Sigmoid colon (tissue), 7 donors: ENCODE measurements at regions of chr19 and their contacts with region 1.

Region 1: DNA sequence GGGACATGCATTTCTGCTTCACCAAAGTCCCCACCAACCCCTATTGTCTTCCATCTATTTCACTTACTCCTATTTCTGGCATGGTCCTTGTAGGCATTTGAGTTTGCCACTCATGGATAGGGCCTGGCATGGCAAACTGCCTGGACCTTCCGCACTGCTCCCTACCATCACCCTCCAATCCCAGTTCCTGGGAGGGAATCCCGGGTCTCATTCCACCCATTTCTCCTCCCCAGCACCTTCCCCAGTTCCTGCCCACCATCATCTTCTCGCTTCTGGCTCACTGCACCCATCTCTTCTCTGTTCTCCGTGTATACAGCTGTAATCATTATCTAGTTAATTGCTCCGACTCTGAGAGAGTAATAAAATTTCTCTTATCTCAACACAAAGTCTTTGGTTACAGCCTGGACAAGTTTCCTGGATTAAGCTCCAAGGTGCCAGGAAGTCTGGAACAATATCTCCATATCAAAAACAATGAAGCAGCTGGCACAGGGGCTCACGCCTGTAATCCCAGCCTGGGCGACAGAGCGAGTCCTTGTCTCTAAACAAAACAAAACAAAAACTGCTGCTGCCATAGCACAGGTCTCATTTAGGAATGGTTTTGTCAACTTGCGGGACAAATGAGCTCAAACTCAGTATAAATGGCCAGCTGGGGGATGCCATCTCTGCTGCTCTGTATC is 17.0 kb upstream of the COX7A1 start:
- DNase-seq: no peak
- H3K4me3 ChIP-seq: no peak overlapping the region
- H3K27ac ChIP-seq: peak overlapping the region; percentile 21 to 67 (median 38)
- H3K4me1 ChIP-seq: peaks cover 0 to 4% (median 2%) of the 10 kb centered on the region in 4 donors
- H3K27me3 ChIP-seq: no peaks in the 10 kb centered on the region
- CTCF ChIP-seq: no peak
- EP300 ChIP-seq: no peak
- POLR2A ChIP-seq: no peak

Region 2: DNA sequence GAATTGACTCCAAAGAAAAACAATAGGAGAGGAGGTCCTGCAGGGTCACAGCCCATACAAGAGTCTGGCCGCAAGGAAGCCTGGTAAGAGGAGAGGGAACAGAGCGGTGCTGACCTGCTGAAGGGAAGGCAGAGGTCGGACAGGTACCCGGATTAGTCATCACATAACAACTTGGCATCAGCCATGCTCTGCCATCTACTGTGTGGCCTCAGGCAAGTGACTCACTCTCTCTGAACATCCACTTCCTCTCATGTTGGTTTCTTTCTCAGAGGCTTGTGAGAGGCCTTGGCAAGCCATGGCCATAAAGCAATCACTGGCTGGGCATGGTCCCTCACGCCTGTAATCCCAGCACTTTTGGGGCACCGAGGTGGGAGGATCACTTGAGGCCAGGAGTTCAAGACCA is 36.7 kb before region 1 on chr19:
- intact Hi-C with region 1: loop called (anchors 1 kb)
- DNase-seq: no peak
- H3K4me3 ChIP-seq: no peak overlapping the region
- H3K27ac ChIP-seq: no peak overlapping the region
- H3K4me1 ChIP-seq: peaks cover 0 to 26% (median 22%) of the 10 kb centered on the region in 4 donors
- H3K27me3 ChIP-seq: no peaks in the 10 kb centered on the region
- CTCF ChIP-seq: no peak
- EP300 ChIP-seq: no peak
- POLR2A ChIP-seq: no peak

Region 3: DNA sequence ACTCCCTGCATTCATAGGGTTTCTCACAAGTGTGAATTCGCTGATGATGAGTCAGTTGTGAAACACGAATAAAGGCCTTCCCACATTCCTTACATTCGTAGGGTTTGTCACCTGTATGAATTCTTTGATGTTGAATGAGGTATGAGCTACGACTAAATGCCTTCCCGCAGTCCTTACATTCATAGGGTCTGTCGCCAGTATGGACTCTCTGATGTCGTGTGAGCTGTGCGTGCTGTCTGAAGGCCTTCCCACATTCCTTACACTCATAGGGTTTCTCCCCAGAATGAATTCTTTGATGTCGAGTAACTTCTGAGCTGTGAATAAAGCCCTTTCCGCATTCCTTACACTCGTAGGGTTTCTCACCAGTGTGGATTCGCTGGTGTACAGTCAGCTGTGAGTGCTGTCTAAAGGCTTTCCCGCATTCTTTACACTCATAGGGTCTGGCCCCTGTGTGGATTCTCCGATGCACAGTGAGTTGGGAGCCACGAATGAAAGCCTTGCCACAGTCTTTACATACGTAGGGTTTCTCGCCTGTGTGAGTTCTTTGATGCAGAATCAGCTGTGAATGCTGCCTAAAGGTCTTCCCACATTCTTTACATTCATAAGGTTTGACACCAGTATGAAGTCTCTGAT is 13.5 kb after region 1 on chr19:
- intact Hi-C with region 1: no loop called
- DNase-seq: no peak
- H3K4me3 ChIP-seq: no peak overlapping the region
- H3K27ac ChIP-seq: no peak overlapping the region
- H3K4me1 ChIP-seq: no peaks in the 10 kb centered on the region
- H3K27me3 ChIP-seq: no peaks in the 10 kb centered on the region
- CTCF ChIP-seq: no peak
- EP300 ChIP-seq: no peak
- POLR2A ChIP-seq: no peak

Region 4: DNA sequence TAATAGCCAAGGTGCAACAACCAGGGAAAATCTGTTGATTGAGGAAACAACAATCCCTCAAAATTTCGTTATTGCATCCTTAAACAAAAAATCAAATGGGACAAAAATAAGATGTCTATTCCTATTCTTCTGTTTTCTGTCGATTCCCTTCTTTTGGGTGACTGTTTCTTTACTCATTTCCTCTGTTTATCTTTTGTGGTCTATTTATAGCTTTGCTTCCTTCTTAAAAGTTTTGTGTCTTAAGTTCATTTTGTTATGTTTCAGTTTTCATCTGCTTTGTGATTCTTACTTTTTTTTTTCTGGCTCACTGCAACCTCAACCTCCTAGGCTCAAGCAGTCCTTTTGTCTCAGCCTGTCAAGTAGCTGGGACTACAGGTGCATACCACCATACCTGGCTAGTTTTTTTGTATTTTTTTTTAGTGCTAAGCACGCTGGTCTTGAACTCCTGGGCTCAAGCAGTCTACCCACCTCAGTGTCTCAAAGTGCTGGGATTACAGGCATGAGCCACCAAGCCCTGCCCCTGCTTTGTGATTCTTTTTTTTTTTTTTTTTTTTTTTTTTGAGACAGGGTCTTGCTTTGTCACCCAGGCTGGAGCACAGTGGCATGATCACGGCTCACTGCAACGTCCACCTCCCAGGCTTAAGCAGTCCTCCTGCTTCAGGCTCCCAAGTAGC is 56.1 kb after region 1 on chr19:
- intact Hi-C with region 1: no loop called
- DNase-seq: no peak
- H3K4me3 ChIP-seq: no peak overlapping the region
- H3K27ac ChIP-seq: peak overlapping the region in 2 of 4 donors; percentile 15 to 24
- H3K4me1 ChIP-seq: peaks cover 0 to 32% (median 23%) of the 10 kb centered on the region in 4 donors
- H3K27me3 ChIP-seq: no peaks in the 10 kb centered on the region
- CTCF ChIP-seq: no peak
- EP300 ChIP-seq: no peak
- POLR2A ChIP-seq: no peak